ENCODE measurements at regions of chr11 and their contacts with region 1.

Region 1: DNA sequence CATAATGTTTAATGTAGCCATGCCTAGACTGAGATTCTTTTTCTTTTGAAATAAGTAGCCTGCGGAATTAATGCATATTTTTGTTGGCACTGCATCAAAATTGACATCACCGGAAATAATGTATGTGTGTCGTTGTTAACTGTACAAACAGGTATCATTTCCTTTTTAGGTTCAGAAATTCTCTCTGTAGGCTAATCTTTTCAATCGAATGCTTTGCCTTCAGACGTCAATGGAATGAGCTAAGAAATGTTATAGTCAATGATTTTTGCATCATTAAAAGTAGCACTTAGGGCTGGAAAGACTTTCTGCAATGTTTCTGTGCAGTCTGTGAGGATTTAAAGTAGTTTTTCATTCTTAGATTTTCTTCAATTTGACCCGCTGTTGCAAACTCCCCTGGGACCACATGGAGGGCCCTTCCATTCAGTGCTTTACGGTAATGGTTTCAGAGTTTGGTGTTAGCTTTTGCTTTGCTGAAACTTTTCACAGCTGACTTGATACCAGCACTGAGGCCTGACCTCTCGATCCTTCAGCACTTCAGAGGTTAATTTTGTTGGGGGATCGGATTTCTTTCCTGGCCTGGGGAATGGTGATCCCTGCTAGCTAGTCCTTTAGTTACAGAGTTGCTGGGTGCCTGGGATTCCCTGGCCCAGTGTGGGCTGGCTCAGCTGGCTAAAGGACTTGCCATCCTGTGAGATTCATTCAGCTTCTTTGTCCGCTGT is 137.8 kb downstream of the DBX1 start:
- DNase-seq: peak; percentile 77
- H3K4me3 Mint-ChIP-seq: peak overlapping the region; percentile 79
- H3K27ac Mint-ChIP-seq: peak overlapping the region; percentile 85
- H3K4me1 Mint-ChIP-seq: peaks cover 19% of the 10 kb centered on the region
- H3K27me3 Mint-ChIP-seq: no peaks in the 10 kb centered on the region
- CTCF ChIP-seq: no peak

Region 2: DNA sequence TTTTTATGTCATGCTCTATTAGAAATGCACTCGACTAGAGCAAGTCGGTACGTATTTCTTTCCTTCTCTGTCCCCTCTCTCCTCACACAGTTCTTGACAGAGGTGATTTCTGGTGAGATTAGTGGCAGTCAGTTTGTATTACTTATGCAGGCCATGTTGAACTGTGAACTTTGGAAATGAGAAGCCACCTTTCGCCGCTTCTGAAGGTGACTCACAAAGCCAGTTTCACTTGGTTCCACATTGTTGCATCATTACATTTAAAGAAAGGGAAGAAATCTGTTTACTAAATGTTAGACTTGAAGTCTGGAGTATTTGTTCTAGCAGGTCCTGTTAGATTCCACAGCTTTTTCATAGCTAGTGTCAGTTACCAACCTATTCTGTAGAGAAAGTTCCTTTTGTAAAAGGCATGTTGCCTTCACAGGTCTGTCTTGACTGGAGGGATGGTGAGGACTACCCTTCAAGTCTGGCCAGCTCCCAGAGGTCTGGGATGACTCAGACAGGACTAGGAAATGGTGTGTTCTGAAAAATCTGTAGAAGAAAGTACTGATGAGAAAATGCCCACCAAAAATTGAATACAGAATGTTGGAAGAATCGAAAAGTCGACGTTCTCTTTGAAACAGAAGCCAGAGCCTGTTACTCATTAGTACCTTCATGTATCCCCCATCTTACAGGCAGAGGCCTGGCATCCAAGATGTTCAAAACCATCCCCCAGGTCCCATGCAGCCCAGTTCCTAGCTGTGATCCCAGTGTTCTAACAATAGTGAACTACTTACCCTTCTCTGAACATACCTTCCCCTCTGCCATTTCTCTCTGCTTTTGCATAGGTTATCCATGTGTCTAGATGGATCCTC is 43.6 kb before region 1 on chr11:
- CTCF ChIA-PET with region 1: interaction called, 16 read pairs
- POLR2A ChIA-PET with region 1: interaction called, 46 read pairs
- intact Hi-C with region 1: loop called (anchors 2 kb)
- DNase-seq: peak; percentile 91
- H3K4me3 Mint-ChIP-seq: peak overlapping the region; percentile 37
- H3K27ac Mint-ChIP-seq: peak overlapping the region; percentile 96
- H3K4me1 Mint-ChIP-seq: peaks cover 41% of the 10 kb centered on the region
- H3K27me3 Mint-ChIP-seq: no peaks in the 10 kb centered on the region
- CTCF ChIP-seq: no peak

Region 3: GRCh38 chr11:19995131-19995530 is 27.4 kb before region 1 on chr11:
- CTCF ChIA-PET with region 1: interaction called, 20 read pairs
- POLR2A ChIA-PET with region 1: interaction called, 79 read pairs
- intact Hi-C with region 1: loop called (anchors 2 kb)
- DNase-seq: peak; percentile 95
- H3K4me3 Mint-ChIP-seq: peak overlapping the region; percentile 73
- H3K27ac Mint-ChIP-seq: peak overlapping the region; percentile 99
- H3K4me1 Mint-ChIP-seq: peaks cover 36% of the 10 kb centered on the region
- H3K27me3 Mint-ChIP-seq: no peaks in the 10 kb centered on the region
- CTCF ChIP-seq: no peak

Region 4: DNA sequence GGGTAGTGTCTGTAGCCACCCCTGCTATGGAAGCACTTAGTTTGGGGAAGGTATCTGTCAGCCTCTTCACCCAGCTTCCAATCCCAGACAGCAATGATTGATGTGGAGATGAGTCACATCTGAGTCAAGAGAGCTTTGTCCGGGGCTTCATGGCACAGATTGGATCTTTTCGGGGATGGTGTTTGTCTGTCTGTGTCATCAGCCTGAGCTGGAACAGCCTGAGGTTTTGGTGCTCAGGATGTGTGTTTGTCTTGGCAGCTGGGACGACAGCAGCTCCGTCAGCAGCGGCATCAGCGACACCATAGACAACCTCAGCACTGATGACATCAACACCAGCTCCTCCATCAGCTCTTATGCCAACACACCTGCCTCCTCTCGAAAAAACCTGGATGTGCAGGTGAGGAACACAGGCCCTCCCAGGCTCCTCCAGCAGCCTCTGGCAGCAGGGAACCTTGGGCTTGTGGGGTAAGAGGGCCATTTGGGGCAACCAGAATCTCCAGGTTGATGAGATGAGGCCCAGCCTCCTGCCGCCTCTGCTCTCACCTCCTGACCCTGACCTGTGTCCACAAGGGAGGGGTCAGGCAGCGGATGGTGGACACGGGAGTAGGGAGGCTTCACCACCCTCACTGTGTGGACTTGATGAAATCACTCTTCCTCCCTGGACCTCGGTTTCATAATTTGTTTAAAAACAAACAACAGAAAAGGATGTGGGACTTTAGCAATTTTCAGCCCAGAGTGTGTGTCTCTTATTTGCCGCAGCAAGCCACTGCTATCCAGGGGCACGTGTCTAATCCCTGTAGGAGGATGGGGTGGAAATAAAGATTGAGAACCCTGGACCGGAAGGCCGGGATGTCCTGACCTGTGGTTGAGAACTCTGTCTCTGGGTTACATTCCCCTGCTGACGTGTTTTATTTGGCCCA is 13.4 kb after region 1 on chr11:
- CTCF ChIA-PET with region 1: interaction called, 47 read pairs
- POLR2A ChIA-PET with region 1: interaction called, 492 read pairs
- intact Hi-C with region 1: no loop called
- DNase-seq: peak; percentile 99
- H3K4me3 Mint-ChIP-seq: peak overlapping the region; percentile 59
- H3K27ac Mint-ChIP-seq: peak overlapping the region; percentile 92
- H3K4me1 Mint-ChIP-seq: peaks cover 66% of the 10 kb centered on the region
- H3K27me3 Mint-ChIP-seq: no peaks in the 10 kb centered on the region
- CTCF ChIP-seq: no peak

Region 5: GRCh38 chr11:20056109-20056949 is 33.8 kb after region 1 on chr11:
- CTCF ChIA-PET with region 1: interaction called, 40 read pairs
- POLR2A ChIA-PET with region 1: interaction called, 691 read pairs
- intact Hi-C with region 1: loop called (anchors 2 kb)
- DNase-seq: peak; percentile 92
- H3K4me3 Mint-ChIP-seq: peak overlapping the region; percentile 26
- H3K27ac Mint-ChIP-seq: peak overlapping the region; percentile 90
- H3K4me1 Mint-ChIP-seq: peaks cover 67% of the 10 kb centered on the region
- H3K27me3 Mint-ChIP-seq: no peaks in the 10 kb centered on the region
- CTCF ChIP-seq: no peak